Tibial artery (tissue), 4 donors: ENCODE measurements at regions of chr12 and their contacts with region 1.

Region 1: GRCh38 chr12:109477185-109477962 is at the starts of genes KCTD10 and UBE3B:
- DNase-seq: peak; percentile 88 to 92
- H3K4me3 ChIP-seq: peak within 1 kb of the TSS; percentile 90 to 97
- H3K27ac ChIP-seq: peak within 1 kb of the TSS; percentile 94 to 96
- H3K4me1 ChIP-seq: peaks cover 0 to 58% (median 52%) of the 10 kb centered on the region in 4 donors
- H3K27me3 ChIP-seq: no peaks in the 10 kb centered on the region
- CTCF ChIP-seq: peak in 1 of 2 experiments; percentile 45

Region 2: DNA sequence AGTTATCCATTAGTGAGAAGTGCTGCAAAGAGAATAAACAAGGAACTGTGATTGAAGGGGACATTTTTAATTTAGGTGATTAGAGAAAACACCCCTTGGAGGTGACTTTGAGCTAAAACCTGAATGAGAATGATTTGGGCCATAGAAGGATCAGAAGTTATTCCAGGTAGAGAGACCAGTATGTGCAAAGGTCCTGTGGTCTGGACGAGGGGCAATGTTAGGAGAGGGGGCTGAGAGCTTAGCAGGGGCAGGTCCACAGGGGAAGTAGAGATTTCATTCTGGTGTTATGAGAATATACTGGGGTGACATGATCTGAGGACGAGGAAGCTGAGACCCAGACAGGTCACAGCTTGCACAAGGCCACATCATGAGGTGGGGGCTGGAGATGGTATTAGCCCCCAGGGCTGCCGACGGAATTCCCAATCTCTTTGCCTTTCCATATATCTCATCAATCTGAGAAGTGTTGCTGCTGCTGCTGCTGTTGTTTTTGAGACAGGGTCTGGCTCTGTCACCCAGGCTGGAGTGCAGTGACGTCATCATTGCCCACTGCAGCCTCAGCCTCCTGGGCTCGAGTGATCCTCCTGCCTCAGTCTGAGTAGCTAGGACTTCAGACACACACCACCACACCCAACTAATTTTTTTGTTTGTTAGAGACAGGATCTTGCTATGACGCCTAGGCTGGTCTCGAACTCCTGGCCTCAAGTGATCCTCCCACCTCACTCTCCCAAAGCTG is 55.9 kb before region 1 on chr12:
- intact Hi-C with region 1: no loop called
- DNase-seq: no peak
- H3K4me3 ChIP-seq: no peak overlapping the region
- H3K27ac ChIP-seq: no peak overlapping the region
- H3K4me1 ChIP-seq: no peaks in the 10 kb centered on the region
- H3K27me3 ChIP-seq: no peaks in the 10 kb centered on the region
- CTCF ChIP-seq: no peak

Region 3: DNA sequence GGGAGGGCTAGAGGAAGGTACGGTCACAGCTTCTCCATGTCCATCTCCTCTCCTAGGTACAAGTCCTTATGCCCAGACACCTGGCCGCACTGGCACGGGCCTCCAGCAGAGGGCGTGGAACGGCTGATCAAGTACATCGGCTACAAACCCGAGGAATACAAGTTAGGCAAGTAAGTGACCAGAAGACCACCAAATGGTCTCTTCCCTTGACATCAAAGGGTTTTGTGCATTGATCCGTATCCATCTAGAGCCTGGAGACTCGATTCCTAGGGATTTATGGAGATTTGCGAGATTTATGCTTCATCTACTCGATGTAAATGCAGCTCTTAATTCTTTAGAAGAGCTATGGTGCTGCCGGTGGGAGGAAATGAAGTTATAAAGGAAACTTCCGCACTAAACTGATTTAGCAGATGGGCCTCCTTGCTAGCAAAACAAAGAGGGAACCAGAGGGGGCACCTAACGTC is 44.5 kb before region 1 on chr12:
- intact Hi-C with region 1: loop called (anchors 2 kb)
- DNase-seq: peak; percentile 90
- H3K4me3 ChIP-seq: no peak overlapping the region
- H3K27ac ChIP-seq: no peak overlapping the region
- H3K4me1 ChIP-seq: peaks cover 0 to 8% (median 6%) of the 10 kb centered on the region in 4 donors
- H3K27me3 ChIP-seq: no peaks in the 10 kb centered on the region
- CTCF ChIP-seq: peak; percentile 73 to 81

Region 4: GRCh38 chr12:109539508-109539907 is 62.1 kb after region 1 on chr12:
- intact Hi-C with region 1: no loop called
- DNase-seq: no peak
- H3K4me3 ChIP-seq: no peak overlapping the region
- H3K27ac ChIP-seq: no peak overlapping the region
- H3K4me1 ChIP-seq: no peaks in the 10 kb centered on the region
- H3K27me3 ChIP-seq: no peaks in the 10 kb centered on the region
- CTCF ChIP-seq: no peak